Calu3 (cell line): ENCODE measurements at regions of chr17 and their contacts with region 1.

Region 1: GRCh38 chr17:75109407-75110233 is at the start of gene ARMC7:
- DNase-seq: peak; percentile 95
- H3K4me3 Mint-ChIP-seq: peak within 1 kb of the TSS; percentile 85
- H3K27ac Mint-ChIP-seq: peak within 1 kb of the TSS; percentile 94
- H3K4me1 Mint-ChIP-seq: peaks cover 33% of the 10 kb centered on the region
- H3K27me3 Mint-ChIP-seq: no peaks in the 10 kb centered on the region
- CTCF ChIP-seq: no peak
- total RNA-seq, gene ARMC7: 18.6 and 19.8 TPM in 2 replicates

Region 2: GRCh38 chr17:75069783-75070182 is 39.8 kb before region 1 on chr17:
- CTCF ChIA-PET with region 1: interaction called, 17 read pairs
- intact Hi-C with region 1: loop called (anchors 1 kb)
- DNase-seq: peak; percentile 54
- H3K4me3 Mint-ChIP-seq: no peak overlapping the region
- H3K27ac Mint-ChIP-seq: no peak overlapping the region
- H3K4me1 Mint-ChIP-seq: peaks cover 5% of the 10 kb centered on the region
- H3K27me3 Mint-ChIP-seq: no peaks in the 10 kb centered on the region
- CTCF ChIP-seq: no peak

Region 3: DNA sequence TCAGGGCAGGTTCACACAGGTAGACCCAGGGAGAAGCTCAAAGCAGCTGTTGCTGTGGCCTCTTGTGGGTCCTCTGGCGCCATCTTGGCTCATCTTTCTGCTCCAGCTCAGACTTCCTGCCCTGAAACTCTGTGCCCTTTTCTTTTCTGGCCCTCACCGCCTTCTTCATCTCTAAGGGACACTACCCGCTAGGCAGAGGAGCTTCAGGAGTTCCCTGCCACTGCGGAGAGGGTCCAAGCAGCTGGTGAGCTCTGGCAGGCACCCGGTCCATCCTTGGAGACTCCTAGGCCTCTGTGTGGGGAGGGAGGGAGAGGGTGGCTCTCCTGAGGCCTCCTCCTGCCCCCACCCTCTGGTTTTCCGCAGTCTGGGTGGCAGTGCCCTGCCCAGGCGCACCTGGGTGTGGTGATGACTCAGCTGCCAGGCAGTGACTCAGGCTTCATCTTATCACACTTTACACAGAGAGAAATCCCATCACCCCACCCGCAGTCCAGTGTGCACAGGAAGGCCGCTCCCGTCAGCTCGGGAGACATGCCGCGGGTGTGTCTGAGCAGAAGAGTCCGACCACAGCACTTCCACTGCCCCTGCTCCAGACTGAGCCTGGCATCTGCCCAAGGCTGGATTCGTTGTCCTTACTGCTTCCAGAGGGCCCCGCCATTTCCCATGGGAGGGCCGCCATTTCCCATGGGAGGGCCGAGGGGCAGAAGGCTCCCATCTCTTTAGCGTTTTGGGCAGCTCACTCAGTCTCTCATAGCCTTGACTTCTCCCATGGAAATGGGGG is 14.6 kb after region 1 on chr17:
- CTCF ChIA-PET with region 1: interaction called, 12 read pairs
- intact Hi-C with region 1: no loop called
- DNase-seq: peak; percentile 96
- H3K4me3 Mint-ChIP-seq: peak overlapping the region; percentile 53
- H3K27ac Mint-ChIP-seq: peak overlapping the region; percentile 93
- H3K4me1 Mint-ChIP-seq: peaks cover 34% of the 10 kb centered on the region
- H3K27me3 Mint-ChIP-seq: no peaks in the 10 kb centered on the region
- CTCF ChIP-seq: no peak

Region 4: DNA sequence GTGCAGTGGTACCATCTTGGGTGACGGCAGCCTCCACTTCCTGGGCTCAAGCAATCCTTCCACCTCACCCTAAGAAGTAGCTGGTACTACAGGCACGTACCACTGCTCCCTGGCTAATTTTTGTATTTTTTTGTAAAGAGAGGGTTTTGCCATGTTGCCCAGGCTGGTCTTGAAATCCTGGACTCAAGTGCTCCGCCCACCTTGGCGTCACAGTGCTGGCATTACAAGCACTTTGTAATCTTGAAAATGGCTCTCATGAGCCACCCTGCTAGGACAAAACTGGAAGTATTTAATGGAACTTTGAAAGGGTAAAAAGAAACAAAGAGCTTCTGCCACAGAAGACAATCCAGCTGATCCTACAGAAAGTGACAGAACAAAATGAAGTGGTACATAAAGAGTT is 63.9 kb after region 1 on chr17:
- CTCF ChIA-PET with region 1: interaction called, 24 read pairs
- intact Hi-C with region 1: loop called (anchors 5 kb)
- DNase-seq: no peak
- H3K4me3 Mint-ChIP-seq: no peak overlapping the region
- H3K27ac Mint-ChIP-seq: no peak overlapping the region
- H3K4me1 Mint-ChIP-seq: no peaks in the 10 kb centered on the region
- H3K27me3 Mint-ChIP-seq: no peaks in the 10 kb centered on the region
- CTCF ChIP-seq: no peak

Region 5: DNA sequence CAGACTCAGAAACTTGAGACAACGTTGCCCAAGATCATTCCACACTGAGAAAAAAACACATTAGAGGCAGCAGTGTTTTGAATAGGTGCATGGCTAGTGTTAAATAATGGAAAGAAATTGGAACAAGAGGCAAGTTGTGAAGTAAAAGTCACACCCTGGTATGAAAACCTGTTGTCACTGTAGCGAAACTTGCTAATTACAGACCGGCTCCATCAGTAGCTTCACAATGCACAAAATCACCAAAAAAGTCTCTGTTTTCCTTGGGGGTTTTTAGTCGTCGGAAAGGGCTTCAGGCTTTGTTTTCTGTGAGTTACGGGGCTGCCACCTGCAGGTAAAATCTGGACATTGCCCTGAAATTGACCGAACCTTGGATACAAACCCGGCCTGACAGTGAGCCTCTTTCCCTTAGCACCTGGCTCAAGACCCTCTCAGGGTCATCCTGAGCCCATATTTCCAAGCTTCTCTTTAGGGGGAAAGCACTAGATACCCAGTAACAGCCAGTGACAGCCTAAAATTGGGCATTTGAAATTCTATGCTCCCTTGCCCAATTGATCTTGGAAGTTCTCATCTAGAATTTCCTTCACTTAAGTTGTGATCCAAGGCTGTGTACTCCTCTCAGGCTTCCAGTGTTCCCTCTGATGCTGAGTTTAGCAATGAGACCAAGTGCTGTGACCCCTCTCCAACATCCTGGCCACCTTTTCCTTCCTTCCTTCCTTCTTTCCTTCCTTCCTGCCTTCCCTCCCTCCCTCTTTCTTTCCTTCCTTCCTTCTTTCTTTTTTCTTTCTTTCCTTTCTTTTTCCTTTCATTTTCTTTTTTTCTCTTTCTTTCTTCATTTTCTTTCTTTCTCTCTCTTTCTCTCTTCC is 303.1 kb after region 1 on chr17:
- CTCF ChIA-PET with region 1: no interaction called
- intact Hi-C with region 1: loop called (anchors 5 kb)
- DNase-seq: peak; percentile 70
- H3K4me3 Mint-ChIP-seq: no peak overlapping the region
- H3K27ac Mint-ChIP-seq: no peak overlapping the region
- H3K4me1 Mint-ChIP-seq: no peaks in the 10 kb centered on the region
- H3K27me3 Mint-ChIP-seq: peaks cover 75% of the 10 kb centered on the region
- CTCF ChIP-seq: peak; percentile 80